ENCODE measurements at regions of chr7 and their contacts with region 1.

Region 1: DNA sequence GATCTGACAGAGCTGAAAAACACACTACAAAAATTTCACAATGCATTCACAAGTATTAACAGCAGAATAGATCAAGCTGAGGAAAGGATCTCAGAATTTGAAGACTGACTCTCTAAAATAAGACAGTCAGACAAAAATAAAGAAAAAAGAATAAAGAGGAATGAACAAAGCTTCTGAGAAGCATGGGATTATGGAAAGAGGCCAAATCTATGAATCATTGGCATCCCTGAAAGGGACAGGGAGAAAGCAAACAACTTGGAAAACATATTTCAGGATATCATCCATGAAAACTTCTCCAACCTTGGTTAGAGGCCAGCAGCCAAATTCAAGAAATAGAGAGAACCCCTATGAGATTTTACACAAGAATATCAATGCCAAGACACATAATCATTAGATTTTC is 804.8 kb upstream of the IGFBP3 start:
- DNase-seq: no peak
- H3K4me3 ChIP-seq: no peak overlapping the region
- H3K27ac ChIP-seq: no peak overlapping the region
- H3K4me1 ChIP-seq: no peaks in the 10 kb centered on the region
- H3K27me3 ChIP-seq: no peaks in the 10 kb centered on the region
- CTCF ChIP-seq: no peak

Region 2: GRCh38 chr7:46633630-46634240 is 92.1 kb before region 1 on chr7:
- CTCF ChIA-PET with region 1: no interaction called
- POLR2A ChIA-PET with region 1: interaction called, 10 read pairs
- intact Hi-C with region 1: no loop called
- DNase-seq: no peak
- H3K4me3 ChIP-seq: no peak overlapping the region
- H3K27ac ChIP-seq: no peak overlapping the region
- H3K4me1 ChIP-seq: peaks cover 4% of the 10 kb centered on the region; the same call in 1 of the 2 replicates
- H3K27me3 ChIP-seq: no peaks in the 10 kb centered on the region
- CTCF ChIP-seq: no peak

Region 3: DNA sequence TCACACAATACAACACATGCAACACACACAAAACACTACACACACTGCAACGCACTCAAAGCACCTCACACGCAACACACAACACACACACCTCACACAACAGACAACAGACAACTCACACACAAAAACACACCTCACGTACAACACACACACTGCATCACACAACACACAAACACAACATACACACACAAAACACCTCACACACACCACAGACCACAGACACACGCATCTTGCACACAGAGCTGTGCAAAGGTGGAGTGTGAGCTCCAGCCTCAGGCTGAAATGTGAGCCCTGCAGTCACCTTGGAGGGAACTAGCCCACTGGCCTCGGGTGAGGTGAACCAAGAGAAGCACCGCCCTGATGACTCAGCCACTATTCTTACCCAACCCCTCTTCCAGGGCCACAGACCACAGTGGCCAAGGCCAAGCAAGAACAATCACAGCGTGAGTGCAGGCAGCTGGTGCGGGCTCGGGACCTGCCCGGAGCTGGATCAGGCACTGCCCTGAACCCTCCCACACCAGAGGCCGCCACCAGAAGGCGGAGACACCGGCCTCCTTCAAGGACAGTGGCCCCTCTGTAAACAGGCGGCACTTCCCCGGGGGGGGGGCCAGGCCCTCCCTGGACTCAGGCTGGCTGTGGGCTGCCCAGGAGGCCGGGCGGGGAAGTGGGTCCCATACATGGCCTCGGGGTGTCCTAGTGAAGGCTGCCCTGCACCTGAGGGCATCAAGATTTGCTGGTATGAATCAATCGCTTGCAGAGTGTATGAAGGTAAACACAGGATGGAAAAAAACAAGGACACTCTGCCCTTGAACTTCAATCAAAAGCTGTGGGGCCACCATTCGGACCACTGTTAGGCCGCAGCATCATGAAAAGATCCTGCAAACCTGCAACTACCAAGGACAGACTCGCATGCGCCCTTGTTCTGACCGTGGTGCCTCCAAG is 749.4 kb after region 1 on chr7:
- CTCF ChIA-PET with region 1: no interaction called
- POLR2A ChIA-PET with region 1: no interaction called
- intact Hi-C with region 1: no loop called
- DNase-seq: peak; percentile 99 to 100
- H3K4me3 ChIP-seq: peak overlapping the region; percentile 16; the same call in 1 of the 2 replicates
- H3K27ac ChIP-seq: peak overlapping the region; percentile 87
- H3K4me1 ChIP-seq: peaks cover 58% of the 10 kb centered on the region
- H3K27me3 ChIP-seq: no peaks in the 10 kb centered on the region
- CTCF ChIP-seq: no peak; the same call in 1 of the 2 replicates

Measured in PC-9 (cell line).